Right ventricle myocardium inferior (tissue), 1 donor: ENCODE measurements at regions of chr17 and their contacts with region 1.

Region 1: DNA sequence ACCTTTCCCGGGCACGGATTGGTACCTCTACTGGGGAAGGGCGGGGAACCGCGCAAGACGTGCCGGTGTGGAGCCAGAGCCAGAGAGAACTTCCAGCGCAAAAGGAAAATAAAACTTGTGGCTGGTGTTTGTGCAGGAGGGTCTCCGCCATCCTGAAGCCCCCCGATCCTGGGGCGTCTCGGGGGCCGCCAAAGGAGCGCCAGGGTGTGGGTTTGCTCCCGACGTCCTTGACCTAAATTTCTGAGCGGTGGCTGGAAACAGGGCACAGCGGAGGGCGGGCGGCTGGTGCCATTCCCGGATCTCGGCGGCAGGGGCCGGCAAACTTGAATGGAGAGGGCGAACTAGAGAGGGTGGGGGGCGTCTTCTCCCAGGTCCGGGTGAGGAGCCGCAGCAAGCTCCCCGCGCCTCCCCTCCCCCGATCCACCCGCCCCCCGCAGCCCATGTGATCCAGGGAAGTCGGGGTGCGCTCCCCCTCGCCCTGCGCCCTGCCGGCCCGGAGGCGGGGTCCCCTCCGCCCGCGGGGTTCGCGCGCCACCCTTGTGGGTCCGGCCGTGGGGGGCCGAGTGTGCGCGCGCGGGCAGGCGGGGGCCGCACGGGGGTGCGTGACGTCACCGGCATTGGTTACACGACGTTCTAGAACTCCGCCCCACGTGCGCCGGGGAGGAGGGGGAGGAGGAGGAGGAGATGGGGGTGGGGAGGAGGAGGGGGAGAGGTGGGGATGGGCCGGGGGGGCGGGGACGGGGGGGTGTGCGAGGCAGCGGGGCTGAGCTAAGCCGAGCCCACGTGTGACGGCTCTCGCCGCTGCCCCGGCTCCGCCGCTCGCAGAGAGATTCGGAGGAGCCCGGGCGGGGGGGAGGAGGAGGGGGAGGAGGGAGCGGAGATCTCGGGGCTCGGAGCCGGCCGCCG is at the start of gene MSI2:
- DNase-seq: peak; percentile 97
- ATAC-seq: peak; percentile 91
- total RNA-seq, gene MSI2: 96.8 TPM

Region 2: DNA sequence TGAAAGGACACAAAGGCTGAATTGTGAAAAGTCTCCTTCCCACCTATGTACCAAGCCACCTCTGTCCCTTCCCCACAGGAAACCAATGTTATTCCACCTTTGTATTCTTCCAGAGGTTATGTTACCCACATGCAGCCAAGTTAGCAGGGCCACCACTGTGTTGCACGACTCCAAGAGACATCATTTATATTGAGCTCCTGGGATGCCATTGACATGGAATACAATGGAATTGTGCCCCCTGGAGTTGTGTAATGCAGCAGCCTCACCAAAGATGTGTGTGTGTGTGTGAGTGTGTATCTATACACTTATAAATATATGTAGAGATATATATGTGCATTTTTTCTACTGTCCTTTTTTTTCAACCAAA is 21.3 kb before region 1 on chr17:
- intact Hi-C with region 1: no loop called
- DNase-seq: no peak
- ATAC-seq: no peak

Region 3: GRCh38 chr17:57329380-57330214 is 73.6 kb after region 1 on chr17:
- intact Hi-C with region 1: loop called (anchors 5 kb)
- DNase-seq: no peak
- ATAC-seq: peak; percentile 65

Region 4: GRCh38 chr17:57366558-57367351 is 110.7 kb after region 1 on chr17:
- intact Hi-C with region 1: loop called (anchors 5 kb)
- DNase-seq: no peak
- ATAC-seq: peak; percentile 75